ENCODE measurements at regions of chr16 and their contacts with region 1.

Region 1: GRCh38 chr16:68229431-68230198 is 6.3 kb downstream of the ESRP2 start:
- DNase-seq: peak; percentile 52 to 68
- H3K4me3 ChIP-seq: no peak overlapping the region
- H3K4me3 Mint-ChIP-seq: no peak overlapping the region
- H3K27ac Mint-ChIP-seq: no peak overlapping the region
- H3K4me1 ChIP-seq: peaks cover 25% of the 10 kb centered on the region
- H3K4me1 Mint-ChIP-seq: peaks cover 22% of the 10 kb centered on the region
- H3K27me3 ChIP-seq: no peaks in the 10 kb centered on the region
- H3K27me3 Mint-ChIP-seq: no peaks in the 10 kb centered on the region
- CTCF ChIP-seq: peak; percentile 90 to 91

Region 2: DNA sequence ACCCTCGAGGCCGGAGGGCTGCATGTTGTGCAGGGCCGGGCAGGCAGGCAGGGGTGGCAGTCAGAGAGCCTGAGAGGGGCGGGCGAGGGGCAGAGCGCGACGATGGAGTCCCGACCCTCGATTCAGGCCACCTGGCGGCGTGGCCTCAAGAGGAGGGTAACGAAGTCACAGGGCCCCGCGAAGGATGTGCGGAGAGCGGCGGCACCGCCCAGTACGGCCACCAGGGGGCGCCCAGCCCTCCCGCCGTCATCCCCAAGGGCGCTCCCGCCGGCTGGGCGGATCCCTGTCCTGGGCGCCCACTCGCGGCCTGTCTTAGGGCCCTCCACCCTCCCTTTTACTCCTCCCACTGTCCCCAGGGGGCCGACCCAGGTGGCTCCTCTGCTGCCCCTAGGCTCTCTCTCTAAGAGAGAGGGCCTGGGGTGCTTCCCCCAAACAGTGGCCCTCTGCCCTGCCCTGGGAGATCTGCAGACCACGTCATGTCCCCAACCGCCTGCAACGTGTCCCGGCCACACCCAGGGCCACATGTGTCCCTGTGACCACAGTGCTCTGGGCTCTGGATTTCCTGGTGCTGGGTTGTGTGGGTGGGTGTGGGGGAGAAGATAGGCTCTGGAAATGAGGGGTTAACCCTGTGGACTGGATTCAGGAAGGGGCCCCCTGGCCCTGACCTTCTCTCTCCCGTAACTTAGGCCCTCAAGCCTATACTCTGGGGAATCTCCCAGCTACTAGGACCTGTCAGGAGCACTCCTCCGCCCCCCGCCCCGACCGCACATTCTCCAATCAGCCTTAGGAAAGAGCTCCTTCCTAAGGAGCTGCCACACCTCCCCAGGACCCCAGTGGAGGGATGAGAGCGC is 236.2 kb before region 1 on chr16:
- CTCF ChIA-PET with region 1: no interaction called
- POLR2A ChIA-PET with region 1: no interaction called
- intact Hi-C with region 1: loop called (anchors 1 kb)
- DNase-seq: peak; percentile 80 to 86
- H3K4me3 ChIP-seq: no peak overlapping the region
- H3K4me3 Mint-ChIP-seq: peak overlapping the region; percentile 37
- H3K27ac Mint-ChIP-seq: no peak overlapping the region
- H3K4me1 ChIP-seq: peaks cover 7% of the 10 kb centered on the region
- H3K4me1 Mint-ChIP-seq: no peaks in the 10 kb centered on the region
- H3K27me3 ChIP-seq: no peaks in the 10 kb centered on the region
- H3K27me3 Mint-ChIP-seq: no peaks in the 10 kb centered on the region
- CTCF ChIP-seq: peak; percentile 95

Region 3: DNA sequence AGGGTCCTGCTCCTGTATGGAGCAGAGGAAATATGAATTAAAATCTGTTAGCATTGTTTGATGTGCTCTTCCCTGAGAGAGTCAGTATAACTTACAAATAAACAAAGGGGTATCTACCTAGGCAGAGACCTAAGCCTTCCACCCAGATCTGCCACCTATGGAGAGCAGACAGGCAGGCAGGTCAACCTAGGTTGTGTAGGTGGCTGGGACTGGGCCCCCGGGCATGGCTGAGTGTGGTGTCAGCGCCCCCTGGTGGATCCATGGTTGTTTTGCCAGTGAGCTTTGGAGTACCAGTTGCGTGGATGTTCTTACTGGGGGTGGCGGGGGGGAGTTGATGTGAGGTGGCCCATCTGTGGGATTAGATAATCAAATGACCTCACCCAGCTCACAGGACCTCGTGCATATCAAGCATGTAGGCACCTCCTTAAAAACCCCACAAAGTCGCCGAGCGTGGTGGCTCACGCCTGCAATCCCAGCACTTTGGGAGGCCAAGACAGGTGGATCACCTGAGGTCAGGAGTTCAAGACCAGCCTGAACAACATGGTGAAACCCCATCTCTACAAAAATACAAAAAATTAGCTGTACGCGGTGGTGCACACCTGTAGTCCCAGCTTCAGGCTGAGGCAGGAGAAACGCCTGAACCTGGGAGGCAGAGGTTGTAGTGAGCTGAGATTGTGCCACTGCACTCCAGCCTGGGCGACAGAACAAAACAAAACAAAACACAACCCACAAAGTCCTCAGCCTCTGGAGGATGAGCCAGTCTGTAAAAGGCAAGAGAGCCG is 188.9 kb before region 1 on chr16:
- CTCF ChIA-PET with region 1: no interaction called
- POLR2A ChIA-PET with region 1: no interaction called
- intact Hi-C with region 1: no loop called
- DNase-seq: peak; percentile 86 to 92
- H3K4me3 ChIP-seq: no peak overlapping the region
- H3K4me3 Mint-ChIP-seq: no peak overlapping the region
- H3K27ac Mint-ChIP-seq: no peak overlapping the region
- H3K4me1 ChIP-seq: no peaks in the 10 kb centered on the region
- H3K4me1 Mint-ChIP-seq: no peaks in the 10 kb centered on the region
- H3K27me3 ChIP-seq: no peaks in the 10 kb centered on the region
- H3K27me3 Mint-ChIP-seq: no peaks in the 10 kb centered on the region
- CTCF ChIP-seq: peak; percentile 92 to 95

Region 4: DNA sequence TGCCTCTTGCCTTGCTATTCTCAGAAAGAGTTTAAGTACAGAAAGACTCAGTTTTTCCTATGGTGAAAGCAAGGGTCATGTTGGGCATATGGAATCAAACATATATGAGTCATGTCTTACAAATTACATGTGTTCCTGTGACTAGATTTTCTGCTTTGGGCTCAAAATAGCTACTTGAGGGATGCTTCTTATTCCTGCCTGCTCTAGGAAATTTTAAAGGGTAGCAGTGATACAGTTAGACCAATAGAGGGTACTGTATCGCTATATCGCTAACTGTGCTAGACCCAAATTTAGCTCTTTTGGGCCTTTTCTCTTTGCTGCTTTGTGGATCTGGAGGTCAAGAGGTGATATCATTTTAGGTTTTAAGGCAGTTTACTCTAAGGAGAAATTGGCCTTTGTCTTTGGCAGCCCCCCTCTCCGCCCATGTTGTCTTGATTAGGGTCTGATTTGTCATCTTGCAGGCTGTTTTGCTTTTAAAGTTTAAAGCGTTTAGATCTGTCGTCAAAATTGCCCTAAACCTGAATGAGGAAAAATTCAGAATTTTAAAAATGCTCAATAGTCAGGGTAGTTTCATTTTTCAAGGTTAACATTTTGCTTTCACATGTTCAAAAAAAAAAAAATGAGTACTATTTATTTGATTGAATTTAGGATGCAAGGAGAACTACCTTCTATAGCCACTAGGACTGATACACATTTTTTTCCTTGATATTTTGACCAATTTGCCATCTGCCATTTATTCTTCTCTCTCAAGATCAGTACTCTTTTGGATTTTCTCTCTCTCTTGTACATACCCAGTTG is 135.6 kb before region 1 on chr16:
- CTCF ChIA-PET with region 1: interaction called, 10 read pairs
- POLR2A ChIA-PET with region 1: no interaction called
- intact Hi-C with region 1: loop called (anchors 1 kb)
- DNase-seq: peak in 1 of 2 experiments; percentile 31
- H3K4me3 ChIP-seq: no peak overlapping the region
- H3K4me3 Mint-ChIP-seq: no peak overlapping the region
- H3K27ac Mint-ChIP-seq: no peak overlapping the region
- H3K4me1 ChIP-seq: peaks cover 34% of the 10 kb centered on the region
- H3K4me1 Mint-ChIP-seq: peaks cover 49% of the 10 kb centered on the region
- H3K27me3 ChIP-seq: no peaks in the 10 kb centered on the region; the same call in 1 of the 2 replicates
- H3K27me3 Mint-ChIP-seq: peaks cover 3% of the 10 kb centered on the region
- CTCF ChIP-seq: peak; percentile 41 to 50

Measured in Caco-2 (cell line).